Cardiac septum (tissue), 1 donor: ENCODE measurements at regions of chr19 and their contacts with region 1.

Region 1: GRCh38 chr19:10332955-10333757 is at the start of gene RAVER1:
- DNase-seq: peak; percentile 100
- total RNA-seq, gene RAVER1: 17.8 TPM

Region 2: GRCh38 chr19:10245189-10245939 is 87.8 kb before region 1 on chr19:
- intact Hi-C with region 1: no loop called
- DNase-seq: no peak

Region 3: DNA sequence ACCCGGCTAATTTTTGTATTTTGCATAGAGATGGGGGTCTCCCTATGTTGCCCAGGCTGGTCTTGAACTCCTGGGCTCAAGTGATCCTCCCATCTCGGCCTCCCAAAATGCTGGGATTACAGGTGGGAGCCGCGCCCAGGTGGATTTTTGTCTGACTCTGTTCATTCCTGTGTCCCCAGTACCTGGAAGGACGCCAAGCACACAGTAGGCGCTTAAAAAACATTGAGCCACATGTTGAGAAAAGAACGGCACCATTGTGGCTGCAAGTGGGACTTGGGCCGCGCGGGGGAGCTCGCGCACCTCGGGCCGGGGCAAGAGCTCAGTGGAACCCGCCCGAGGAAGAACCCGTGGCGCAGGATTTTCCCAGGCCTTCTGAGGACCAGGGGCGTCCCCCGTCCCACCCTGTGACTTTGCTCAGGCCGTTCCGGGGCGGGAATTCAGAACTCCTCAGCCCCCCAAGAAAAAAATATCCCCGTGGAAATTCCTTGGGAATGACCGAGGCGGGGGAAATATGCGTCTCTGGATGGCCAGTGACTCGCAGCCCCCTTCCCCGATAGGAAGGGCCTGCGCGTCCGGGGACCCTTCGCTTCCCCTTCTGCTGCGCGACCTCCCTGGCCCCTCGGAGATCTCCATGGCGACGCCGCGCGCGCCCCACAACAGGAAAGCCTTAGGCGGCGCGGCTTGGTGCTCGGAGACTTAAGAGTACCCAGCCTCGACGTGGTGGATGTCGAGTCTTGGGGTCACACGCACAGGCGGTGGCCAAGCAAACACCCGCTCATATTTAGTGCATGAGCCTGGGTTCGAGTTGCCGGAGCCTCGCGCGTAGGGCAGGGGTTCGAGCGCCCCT is 63.6 kb before region 1 on chr19:
- intact Hi-C with region 1: loop called (anchors 5 kb)
- DNase-seq: peak; percentile 95

Region 4: GRCh38 chr19:10380313-10381102 is 47.4 kb after region 1 on chr19 and contains the start of gene TYK2:
- intact Hi-C with region 1: loop called (anchors 2 kb)
- DNase-seq: peak; percentile 99
- total RNA-seq, gene TYK2: 66.2 TPM

Region 5: GRCh38 chr19:10403137-10404021 is 70.2 kb after region 1 on chr19 and contains the start of gene CDC37:
- intact Hi-C with region 1: loop called (anchors 2 kb)
- DNase-seq: peak; percentile 99
- total RNA-seq, gene CDC37: 140 TPM

Region 6: GRCh38 chr19:10416380-10417257 is 83.5 kb after region 1 on chr19:
- intact Hi-C with region 1: no loop called
- DNase-seq: peak; percentile 89